K562 (cell line): ENCODE measurements at regions of chr4 and their contacts with region 1.

Region 1: DNA sequence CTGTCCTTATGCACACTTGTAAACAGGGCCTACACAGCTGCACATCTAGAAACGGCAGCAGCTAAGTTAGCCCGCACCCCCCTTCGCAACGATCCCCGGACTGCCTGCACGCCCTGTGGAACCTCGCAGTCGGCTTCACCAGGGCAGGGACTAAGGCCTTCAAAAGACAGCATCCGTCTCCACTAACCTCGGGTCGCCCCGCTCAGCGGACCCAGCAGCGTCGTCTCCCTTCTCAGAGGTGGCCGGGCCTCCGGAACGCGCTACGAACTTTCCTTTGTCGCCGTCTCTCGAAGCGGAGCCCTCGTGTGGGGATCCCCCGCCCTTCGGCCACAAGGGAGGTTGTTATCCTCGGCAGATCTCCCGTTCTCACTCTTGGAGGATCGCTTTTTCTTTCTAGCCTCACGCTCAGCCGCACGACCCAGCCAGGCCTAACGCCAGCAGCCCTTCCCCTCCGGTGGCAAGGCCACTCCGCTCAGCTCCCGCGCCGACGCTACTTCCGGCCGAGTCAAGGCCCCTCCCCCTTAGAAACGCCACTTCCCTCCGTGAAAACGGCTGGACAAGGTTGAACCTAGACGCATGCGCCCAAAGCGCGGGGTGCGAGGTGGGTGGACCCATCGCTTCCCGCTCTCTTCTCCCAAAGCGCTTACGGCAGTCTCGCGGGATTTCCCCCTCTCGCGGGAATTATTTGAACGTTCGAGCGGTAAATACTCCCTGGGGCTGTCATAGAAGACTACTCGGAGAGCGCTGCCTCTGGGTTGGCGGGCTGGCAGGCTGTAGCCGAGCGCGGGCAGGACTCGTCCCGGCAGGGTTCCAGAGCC is at the starts of genes DCAF16 and NCAPG:
- DNase-seq: peak; percentile 94 to 100 (median 96)
- ATAC-seq: peak; percentile 88
- H3K4me3 ChIP-seq: peak within 1 kb of the TSS; percentile 65
- H3K27ac ChIP-seq: peak within 1 kb of the TSS; percentile 96
- H3K4me1 ChIP-seq: peaks cover 3 to 10% of the 10 kb centered on the region in 2 experiments; a peak in 4 of 5 replicates
- H3K27me3 ChIP-seq: no peaks in the 10 kb centered on the region
- CTCF ChIP-seq: peak in 1 of 3 experiments; percentile 30; a peak in 1 of 6 replicates
- EP300 ChIP-seq: no peak
- POLR2A ChIP-seq: peak; percentile 98
- RAD21 ChIP-seq: no peak
- polyA plus RNA-seq, gene DCAF16: 20.5 to 23.8 TPM
- polyA plus RNA-seq, gene NCAPG: 25.6 to 30.5 TPM

Region 2: GRCh38 chr4:17562160-17562559 is 248.3 kb before region 1 on chr4:
- CTCF ChIA-PET with region 1: no interaction called
- POLR2A ChIA-PET with region 1: no interaction called
- in situ Hi-C with region 1: loop called (anchors 10 kb)
- intact Hi-C with region 1: no loop called
- DNase-seq: peak in 3 of 4 experiments; percentile 17 to 20 (median 18)
- ATAC-seq: peak; percentile 61
- H3K4me3 ChIP-seq: no peak overlapping the region
- H3K27ac ChIP-seq: no peak overlapping the region
- H3K4me1 ChIP-seq: peaks cover 0 to 2% of the 10 kb centered on the region in 2 experiments; a peak in 1 of 5 replicates
- H3K27me3 ChIP-seq: peaks cover 18 to 38% of the 10 kb centered on the region in 2 experiments; a peak in 4 of 5 replicates
- CTCF ChIP-seq: peak; percentile 26 to 42 (median 36); a peak in 3 of 6 replicates
- EP300 ChIP-seq: no peak
- POLR2A ChIP-seq: no peak
- RAD21 ChIP-seq: peak in 1 of 2 experiments; percentile 44; a peak in 1 of 4 replicates

Region 3: GRCh38 chr4:17636696-17637622 is 173.5 kb before region 1 on chr4:
- CTCF ChIA-PET with region 1: no interaction called
- POLR2A ChIA-PET with region 1: no interaction called
- in situ Hi-C with region 1: no loop called
- intact Hi-C with region 1: loop called (anchors 10 kb)
- DNase-seq: peak; percentile 69 to 86 (median 74)
- ATAC-seq: peak; percentile 99
- H3K4me3 ChIP-seq: no peak overlapping the region
- H3K27ac ChIP-seq: no peak overlapping the region
- H3K4me1 ChIP-seq: peaks cover 3 to 13% of the 10 kb centered on the region in 2 experiments; a peak in 2 of 5 replicates
- H3K27me3 ChIP-seq: no peaks in the 10 kb centered on the region
- CTCF ChIP-seq: peak; percentile 79 to 92 (median 86)
- EP300 ChIP-seq: no peak
- POLR2A ChIP-seq: peak; percentile 48; the same call in 1 of the 2 replicates
- RAD21 ChIP-seq: peak; percentile 63 to 79

Region 4: DNA sequence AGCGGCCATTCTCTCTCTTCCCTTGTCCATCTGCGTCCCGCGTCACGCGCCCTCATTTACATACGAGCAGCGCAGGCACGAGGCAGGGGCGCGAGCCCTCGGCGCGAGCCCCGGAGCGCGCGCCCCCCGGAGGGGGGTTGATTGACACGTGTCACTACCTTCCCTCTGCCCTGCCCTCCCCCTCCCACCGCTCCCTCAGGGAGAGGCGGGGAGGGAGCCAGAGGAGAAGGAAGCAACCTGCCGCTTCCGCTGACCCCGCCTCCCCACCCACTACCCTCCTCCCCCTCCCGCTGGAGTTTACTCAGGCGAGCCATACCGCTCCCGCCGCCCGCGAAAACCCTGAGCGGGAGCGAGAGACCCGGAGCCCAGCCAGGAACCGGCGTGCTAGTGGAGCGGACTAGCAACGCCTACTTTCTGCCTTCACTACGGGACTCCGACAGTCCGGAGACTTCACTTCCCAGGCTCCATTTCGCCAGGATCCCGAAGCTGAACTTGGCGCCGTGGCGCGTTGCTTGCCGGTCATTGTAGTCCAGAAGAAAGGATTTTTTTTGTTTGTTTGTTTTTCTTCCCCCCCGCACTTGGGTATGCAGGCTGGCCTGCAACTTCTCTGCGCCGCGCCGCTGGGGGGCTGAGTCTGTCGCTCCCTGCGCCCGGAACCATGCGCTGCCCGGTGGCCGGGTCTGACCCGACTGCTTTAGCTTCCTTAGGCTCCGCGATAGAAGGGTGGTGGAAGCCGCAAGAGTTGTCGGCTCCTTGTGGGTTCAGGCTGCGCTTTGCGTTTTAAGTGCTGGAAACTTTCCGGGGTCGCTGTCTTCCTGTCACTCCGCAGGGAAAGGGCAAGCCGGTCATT is 211.5 kb after region 1 on chr4 and contains the start of gene LCORL:
- CTCF ChIA-PET with region 1: no interaction called
- POLR2A ChIA-PET with region 1: no interaction called
- in situ Hi-C with region 1: no loop called
- intact Hi-C with region 1: loop called (anchors 2 kb)
- DNase-seq: peak; percentile 93 to 97 (median 94)
- ATAC-seq: peak; percentile 88
- H3K4me3 ChIP-seq: peak within 1 kb of the TSS; percentile 94
- H3K27ac ChIP-seq: peak within 1 kb of the TSS; percentile 95
- H3K4me1 ChIP-seq: no peaks in the 10 kb centered on the region; a peak in 1 of 5 replicates
- H3K27me3 ChIP-seq: no peaks in the 10 kb centered on the region
- CTCF ChIP-seq: peak; percentile 17 to 40 (median 33); a peak in 3 of 6 replicates
- EP300 ChIP-seq: peak; percentile 11; the same call in 1 of the 2 replicates
- POLR2A ChIP-seq: peak; percentile 79
- RAD21 ChIP-seq: peak in 1 of 2 experiments; percentile 9; a peak in 1 of 4 replicates
- polyA plus RNA-seq, gene LCORL: 3.1 to 4.3 TPM